ENCODE measurements at regions of chr14 and their contacts with region 1.

Region 1: GRCh38 chr14:65552724-65553123 is 140.2 kb downstream of the FUT8 start:
- DNase-seq: no peak
- H3K4me3 Mint-ChIP-seq: no peak overlapping the region
- H3K27ac Mint-ChIP-seq: no peak overlapping the region
- H3K4me1 Mint-ChIP-seq: peaks cover 11% of the 10 kb centered on the region
- H3K27me3 Mint-ChIP-seq: no peaks in the 10 kb centered on the region

Region 2: DNA sequence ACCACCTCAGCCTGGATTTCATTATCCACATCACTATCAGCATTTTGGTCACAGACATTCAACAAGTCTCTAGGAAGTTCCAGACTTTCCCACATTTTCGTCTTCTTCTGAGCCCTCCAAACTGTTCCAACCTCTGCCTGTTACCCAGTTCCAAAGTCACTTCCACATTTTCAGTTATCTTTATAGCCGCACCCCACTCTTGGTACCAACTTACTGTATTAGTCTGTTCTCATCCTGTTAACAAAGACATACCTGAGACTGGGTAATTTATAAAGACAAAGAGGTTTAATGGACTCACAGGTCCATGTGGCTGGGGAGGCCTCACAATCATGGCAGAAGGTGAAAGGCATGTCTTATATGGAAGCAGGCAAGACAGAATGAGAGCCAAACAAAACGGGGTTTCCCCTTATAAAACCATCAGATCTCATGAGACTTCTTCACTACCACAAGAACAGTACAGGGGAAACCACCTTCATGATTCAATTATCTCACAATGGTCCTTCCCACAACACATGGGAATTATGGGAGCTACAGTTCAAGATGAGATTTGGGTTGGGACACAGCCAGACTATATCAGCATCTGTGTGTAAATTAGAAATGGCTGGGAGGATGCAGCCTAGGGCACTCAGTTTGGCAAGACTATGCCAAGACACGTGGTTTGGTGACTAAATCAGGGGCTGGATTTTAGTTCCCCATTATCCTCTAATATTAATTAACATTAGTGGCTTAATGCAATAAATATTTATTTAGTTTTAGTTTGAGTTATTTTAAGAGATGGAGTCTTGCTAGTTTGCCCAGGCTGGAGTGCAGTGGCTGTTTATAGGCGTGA is 156.4 kb before region 1 on chr14:
- intact Hi-C with region 1: no loop called
- DNase-seq: no peak
- H3K4me3 Mint-ChIP-seq: peak overlapping the region; percentile 1
- H3K27ac Mint-ChIP-seq: peak overlapping the region; percentile 63
- H3K4me1 Mint-ChIP-seq: peaks cover 15% of the 10 kb centered on the region
- H3K27me3 Mint-ChIP-seq: no peaks in the 10 kb centered on the region

Region 3: GRCh38 chr14:65565948-65566347 is 13.2 kb after region 1 on chr14:
- intact Hi-C with region 1: loop called (anchors 2 kb)
- DNase-seq: no peak
- H3K4me3 Mint-ChIP-seq: no peak overlapping the region
- H3K27ac Mint-ChIP-seq: peak overlapping the region; percentile 22
- H3K4me1 Mint-ChIP-seq: peaks cover 28% of the 10 kb centered on the region
- H3K27me3 Mint-ChIP-seq: no peaks in the 10 kb centered on the region

Measured in activated CD4-positive, alpha-beta T cell treated with anti-CD3 and anti-CD28 coated beads, Interleukin-2, amount 10 ng/mL, durations not matched to agents 24 days and 14 days (primary cell).